Activated T-helper 2 cell treated with anti-CD3 and anti-CD28 coated beads, Interferon-gamma antibody, Interleukin-2, Interleukin-4, amounts not matched to agents 10 μg/mL and 5 μg/mL and 100 μg/mL, durations not matched to agents 14 hours and 24 hours and 36 hours (primary cell): ENCODE measurements at regions of chr14 and their contacts with region 1.

Region 1: GRCh38 chr14:21965042-21965441 is 291.4 kb upstream of the OR4E1 start:
- DNase-seq: peak; percentile 48
- H3K4me3 Mint-ChIP-seq: peak overlapping the region; percentile 68
- H3K27ac Mint-ChIP-seq: peak overlapping the region; percentile 55
- H3K4me1 Mint-ChIP-seq: peaks cover 27% of the 10 kb centered on the region
- H3K27me3 Mint-ChIP-seq: peaks cover 6% of the 10 kb centered on the region

Region 2: DNA sequence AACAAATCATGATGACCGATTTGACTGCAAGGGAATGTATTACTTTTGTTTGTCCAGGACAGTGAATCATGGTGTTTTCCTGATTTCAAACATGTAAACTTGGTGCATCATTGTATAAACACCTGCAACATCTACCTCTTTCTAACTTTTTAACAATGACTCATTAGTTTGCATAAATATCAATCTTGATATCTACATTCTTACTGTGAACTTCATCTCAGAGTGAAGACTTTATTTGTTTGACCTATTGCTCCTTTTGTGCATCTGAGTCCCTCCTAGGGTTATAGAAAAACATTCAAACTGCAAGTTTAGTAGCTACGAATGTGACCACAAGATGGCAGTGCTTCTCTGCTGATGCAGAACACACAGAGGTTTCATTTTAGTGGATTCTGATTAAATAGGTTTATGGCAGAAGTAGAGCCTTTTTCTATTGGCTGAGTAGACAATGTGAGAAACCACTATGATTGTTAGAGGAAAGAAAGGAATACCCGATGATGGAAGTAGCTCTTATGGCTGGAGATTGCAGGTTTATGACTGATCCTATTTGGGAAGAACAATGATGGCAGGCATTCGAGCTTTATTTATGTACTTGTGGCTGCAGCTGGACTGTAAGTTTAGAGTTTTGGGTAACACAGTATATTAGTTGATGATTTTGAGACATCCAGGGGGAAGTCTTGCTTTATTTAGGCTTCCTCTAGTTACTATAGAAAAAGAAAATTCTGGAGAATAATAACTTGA is 47.2 kb before region 1 on chr14:
- intact Hi-C with region 1: no loop called
- DNase-seq: peak; percentile 52
- H3K4me3 Mint-ChIP-seq: peak overlapping the region; percentile 75
- H3K27ac Mint-ChIP-seq: peak overlapping the region; percentile 64
- H3K4me1 Mint-ChIP-seq: peaks cover 55% of the 10 kb centered on the region
- H3K27me3 Mint-ChIP-seq: no peaks in the 10 kb centered on the region

Region 3: GRCh38 chr14:21940887-21941856 is 23.9 kb before region 1 on chr14:
- intact Hi-C with region 1: loop called (anchors 2 kb)
- DNase-seq: no peak
- H3K4me3 Mint-ChIP-seq: peak overlapping the region; percentile 81
- H3K27ac Mint-ChIP-seq: peak overlapping the region; percentile 68
- H3K4me1 Mint-ChIP-seq: peaks cover 12% of the 10 kb centered on the region
- H3K27me3 Mint-ChIP-seq: peaks cover 21% of the 10 kb centered on the region

Region 4: DNA sequence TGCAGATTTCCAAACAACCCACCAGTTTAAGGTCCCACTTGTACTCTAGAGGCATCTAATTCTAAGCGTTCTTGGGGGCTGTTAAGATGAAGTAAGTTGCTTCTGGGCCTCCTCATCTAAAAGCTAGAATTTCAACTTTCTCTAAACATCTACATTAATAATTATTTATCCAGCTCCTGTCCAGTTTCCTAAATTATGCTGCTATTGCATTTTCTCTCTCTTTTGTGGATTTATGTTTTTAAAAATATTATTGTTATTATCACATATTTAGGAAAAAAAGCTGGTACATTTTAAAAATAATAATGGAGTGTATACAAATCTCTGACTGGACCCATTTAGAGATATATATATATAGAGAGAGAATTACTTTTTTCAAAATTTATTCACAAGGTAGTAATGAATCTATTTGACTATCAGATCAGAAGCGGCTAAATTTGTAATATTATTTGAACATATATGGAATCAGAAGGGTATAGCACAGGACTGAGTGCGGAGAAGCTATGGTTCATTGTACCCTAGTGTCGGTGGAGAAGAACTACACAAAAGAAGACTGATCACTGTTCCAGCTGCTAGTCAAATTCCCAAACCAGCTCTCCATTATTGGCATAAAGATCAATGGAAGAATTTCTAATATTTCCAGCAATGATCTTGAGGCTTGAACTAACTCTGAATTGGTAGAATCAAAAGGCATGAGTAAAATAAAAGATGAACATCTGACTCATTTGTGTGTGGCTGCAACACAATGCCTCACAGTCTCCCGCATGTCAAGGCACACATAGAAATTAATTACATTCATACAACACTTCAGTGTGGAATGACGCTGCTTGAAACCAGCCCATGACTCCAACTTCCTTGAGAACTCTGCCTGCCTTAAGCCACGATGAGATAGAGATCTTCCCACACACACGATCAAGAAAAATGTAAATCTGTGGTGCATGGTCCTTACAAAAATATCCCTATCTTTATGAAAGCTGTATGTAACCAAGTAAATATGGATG is 142.0 kb after region 1 on chr14:
- intact Hi-C with region 1: no loop called
- DNase-seq: no peak
- H3K4me3 Mint-ChIP-seq: peak overlapping the region; percentile 30
- H3K27ac Mint-ChIP-seq: peak overlapping the region; percentile 81
- H3K4me1 Mint-ChIP-seq: peaks cover 23% of the 10 kb centered on the region
- H3K27me3 Mint-ChIP-seq: no peaks in the 10 kb centered on the region